H1 (cell line): ENCODE measurements at regions of chr11 and their contacts with region 1.

Region 1: GRCh38 chr11:119218141-119218878 is 12.2 kb downstream of the CBL start:
- DNase-seq: no peak
- H3K4me3 ChIP-seq: no peak overlapping the region
- H3K27ac ChIP-seq: no peak overlapping the region
- H3K4me1 ChIP-seq: no peaks in the 10 kb centered on the region; a peak in 1 of 7 replicates
- H3K27me3 ChIP-seq: no peaks in the 10 kb centered on the region
- CTCF ChIP-seq: no peak
- EP300 ChIP-seq: no peak
- POLR2A ChIP-seq: no peak
- RAD21 ChIP-seq: no peak

Region 2: DNA sequence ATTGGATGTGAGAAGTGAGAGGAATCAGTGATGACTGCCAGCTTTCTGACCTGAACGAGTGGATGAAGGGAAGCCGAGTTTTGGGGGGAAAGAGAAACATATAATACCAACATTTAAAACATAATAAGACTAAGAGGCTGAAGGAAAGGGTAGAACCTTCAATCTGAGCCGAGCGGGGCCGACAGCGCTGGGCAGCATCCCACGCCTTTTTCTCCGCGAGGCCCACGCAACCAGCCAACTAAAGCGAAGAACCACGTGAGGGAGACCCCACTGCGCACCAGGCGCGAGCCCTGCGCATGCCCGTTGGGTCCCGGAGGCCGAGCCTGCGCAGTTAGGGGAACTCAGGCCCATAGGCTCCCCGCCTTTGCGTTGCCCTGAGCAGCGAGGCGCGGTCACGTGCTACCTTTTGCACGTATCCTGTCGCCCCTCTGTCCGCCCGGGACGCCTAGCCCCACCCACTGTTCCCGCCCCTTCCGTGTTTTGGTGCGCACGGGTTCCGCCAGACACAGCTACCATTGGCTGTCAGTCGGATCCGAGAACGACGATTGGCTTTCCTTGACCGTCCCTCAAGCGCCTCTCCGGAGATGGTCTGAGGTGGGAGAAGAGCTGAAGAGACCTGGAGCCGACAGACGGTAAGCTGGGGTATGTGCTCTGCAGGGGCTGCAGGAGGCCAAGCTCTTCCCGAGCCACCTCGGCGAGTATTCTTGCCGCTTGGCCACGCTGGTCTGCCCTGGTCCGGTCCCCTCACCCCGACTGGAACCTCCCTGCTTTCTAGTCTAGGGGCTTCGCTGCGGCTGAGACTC is 97.1 kb before region 1 on chr11 and contains the start of gene HINFP:
- CTCF ChIA-PET with region 1: no interaction called
- POLR2A ChIA-PET with region 1: no interaction called
- DNase-seq: peak; percentile 98
- H3K4me3 ChIP-seq: peak within 1 kb of the TSS; percentile 63 to 97 (median 93)
- H3K27ac ChIP-seq: peak within 1 kb of the TSS; percentile 68
- H3K4me1 ChIP-seq: peaks cover 2 to 10% (median 6%) of the 10 kb centered on the region in 4 experiments; a peak in 6 of 7 replicates
- H3K27me3 ChIP-seq: no peaks in the 10 kb centered on the region
- CTCF ChIP-seq: no peak
- EP300 ChIP-seq: no peak
- POLR2A ChIP-seq: peak; percentile 33 to 87
- RAD21 ChIP-seq: no peak
- total RNA-seq, gene HINFP: 35.0 and 36.6 TPM in 2 replicates

Region 3: DNA sequence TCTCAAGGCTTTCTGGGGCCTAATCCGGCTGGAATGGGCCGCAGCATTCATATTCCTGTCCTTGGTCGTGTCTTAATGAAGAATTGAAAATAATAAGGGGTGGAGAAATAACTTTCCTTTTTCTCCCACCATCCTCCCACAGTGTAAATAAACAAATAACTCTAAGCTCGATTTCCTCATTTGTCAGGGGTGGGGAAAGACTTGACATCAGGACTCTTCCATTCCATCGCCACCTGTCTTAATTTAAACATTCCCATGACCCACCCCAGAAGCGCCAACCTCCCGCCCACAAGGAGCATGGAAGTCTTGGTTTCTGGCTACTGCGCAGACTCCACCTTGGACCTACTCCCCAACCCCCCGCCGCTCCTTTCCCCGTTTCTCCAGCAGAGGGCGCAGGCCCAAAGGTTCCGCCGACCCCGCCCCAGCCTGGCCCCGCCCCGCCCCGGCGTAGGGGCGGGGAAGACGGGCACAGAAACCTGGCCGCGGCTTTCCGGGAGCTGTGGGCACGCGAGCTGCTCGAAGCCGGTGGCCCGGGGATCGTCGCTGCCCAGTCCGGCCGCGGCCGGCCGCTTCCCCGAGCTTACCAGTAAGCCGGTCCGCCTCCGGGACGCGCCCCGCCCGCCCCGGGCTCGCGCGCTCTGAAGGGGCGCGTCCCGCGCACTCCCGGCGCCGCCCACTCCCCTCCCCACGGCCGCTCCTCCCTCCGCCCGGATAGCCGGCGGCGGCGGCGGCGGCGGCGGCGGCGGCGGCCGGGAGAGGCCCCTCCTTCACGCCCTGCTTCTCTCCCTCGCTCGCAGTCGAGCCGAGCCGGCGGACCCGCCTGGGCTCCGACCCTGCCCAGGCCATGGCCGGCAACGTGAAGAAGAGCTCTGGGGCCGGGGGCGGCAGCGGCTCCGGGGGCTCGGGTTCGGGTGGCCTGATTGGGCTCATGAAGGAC is 12.5 kb before region 1 on chr11 and contains the start of gene CBL:
- CTCF ChIA-PET with region 1: interaction called, 9 read pairs
- POLR2A ChIA-PET with region 1: interaction called, 13 read pairs
- DNase-seq: peak; percentile 75 to 99
- H3K4me3 ChIP-seq: peak within 1 kb of the TSS; percentile 92 to 100 (median 94)
- H3K27ac ChIP-seq: peak within 1 kb of the TSS; percentile 89; the same call in 1 of the 2 replicates
- H3K4me1 ChIP-seq: peaks cover 4 to 10% (median 6%) of the 10 kb centered on the region in 4 experiments; a peak in 6 of 7 replicates
- H3K27me3 ChIP-seq: no peaks in the 10 kb centered on the region
- CTCF ChIP-seq: peak; percentile 75 to 77 (median 77)
- EP300 ChIP-seq: peak in 1 of 2 experiments; percentile 36; a peak in 1 of 3 replicates
- POLR2A ChIP-seq: peak in 1 of 2 experiments; percentile 28; a peak in 1 of 3 replicates
- RAD21 ChIP-seq: peak; percentile 4 to 41; a peak in 3 of 4 replicates
- total RNA-seq, gene CBL: 57.6 and 57.8 TPM in 2 replicates